Activated CD8-positive, alpha-beta T cell treated with anti-CD3 and anti-CD28 coated beads, Interleukin-2, amount 10 ng/mL, durations not matched to agents 7 days and 5 days (primary cell): ENCODE measurements at regions of chr7 and their contacts with region 1.

Region 1: GRCh38 chr7:106056513-106057203 is 55.5 kb downstream of the SYPL1 start:
- DNase-seq: peak; percentile 78
- ATAC-seq: peak; percentile 98
- H3K4me3 Mint-ChIP-seq: no peak overlapping the region
- H3K27ac Mint-ChIP-seq: no peak overlapping the region
- H3K4me1 Mint-ChIP-seq: peaks cover 35% of the 10 kb centered on the region
- H3K27me3 Mint-ChIP-seq: peaks cover 2% of the 10 kb centered on the region

Region 2: GRCh38 chr7:106009403-106010226 is 47.0 kb before region 1 on chr7:
- CTCF ChIA-PET with region 1: no interaction called
- POLR2A ChIA-PET with region 1: no interaction called
- DNase-seq: peak; percentile 80
- ATAC-seq: peak; percentile 100
- H3K4me3 Mint-ChIP-seq: no peak overlapping the region
- H3K27ac Mint-ChIP-seq: no peak overlapping the region
- H3K4me1 Mint-ChIP-seq: peaks cover 12% of the 10 kb centered on the region
- H3K27me3 Mint-ChIP-seq: peaks cover 19% of the 10 kb centered on the region

Region 3: DNA sequence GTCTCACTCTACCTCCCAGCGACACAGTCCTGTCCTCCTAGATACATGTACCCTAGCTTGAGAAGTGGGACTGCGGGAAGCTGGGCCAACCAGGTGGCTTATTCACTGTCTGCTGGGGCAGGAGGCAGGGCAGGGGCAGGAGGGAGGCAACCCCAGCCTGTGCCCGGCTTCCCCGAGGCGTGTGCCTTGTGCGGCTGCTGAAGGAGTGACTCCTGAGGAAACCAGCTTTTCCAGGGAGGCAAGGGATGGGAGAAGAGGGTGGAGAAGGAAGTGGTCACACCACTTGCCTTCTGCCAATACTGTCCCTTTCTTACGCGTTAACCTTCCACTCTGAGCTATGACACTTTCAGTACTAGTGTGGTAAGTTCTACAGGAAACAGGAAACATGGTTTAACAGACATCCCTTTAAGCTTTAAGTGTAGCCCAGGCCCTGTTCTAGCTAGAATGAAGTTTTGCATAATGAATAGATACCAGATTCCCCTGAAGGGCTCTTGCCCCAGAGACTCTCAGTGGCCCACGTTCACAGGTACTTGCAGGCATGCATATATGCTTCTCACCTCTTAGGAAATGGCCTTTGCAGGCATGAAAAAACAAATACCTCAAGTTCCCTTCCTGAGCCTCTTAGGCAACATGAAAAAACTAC is 14.8 kb after region 1 on chr7:
- CTCF ChIA-PET with region 1: interaction called, 48 read pairs
- POLR2A ChIA-PET with region 1: interaction called, 8 read pairs
- DNase-seq: peak; percentile 68
- ATAC-seq: peak; percentile 98
- H3K4me3 Mint-ChIP-seq: peak overlapping the region; percentile 76
- H3K27ac Mint-ChIP-seq: peak overlapping the region; percentile 99
- H3K4me1 Mint-ChIP-seq: peaks cover 72% of the 10 kb centered on the region
- H3K27me3 Mint-ChIP-seq: no peaks in the 10 kb centered on the region

Region 4: DNA sequence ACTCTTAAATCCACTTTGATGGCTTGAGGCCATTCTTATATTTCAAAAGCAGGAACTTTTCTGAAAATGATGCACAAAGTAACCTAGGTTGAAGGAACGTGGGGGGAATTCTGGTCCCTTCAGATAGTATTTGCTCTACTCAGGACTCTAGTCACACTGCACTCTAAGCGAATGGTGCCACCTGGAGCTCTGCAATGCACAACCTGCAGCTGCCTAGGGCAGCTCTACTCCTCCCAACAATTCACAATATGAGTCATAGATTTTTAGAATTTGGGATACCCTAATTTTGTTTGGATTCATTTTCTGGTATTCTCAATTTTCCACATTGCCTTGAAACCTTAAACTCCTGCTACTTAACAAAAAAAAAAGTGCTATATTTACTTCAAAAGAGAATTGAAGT is 38.1 kb after region 1 on chr7:
- CTCF ChIA-PET with region 1: interaction called, 11 read pairs
- POLR2A ChIA-PET with region 1: no interaction called
- DNase-seq: no peak
- ATAC-seq: no peak
- H3K4me3 Mint-ChIP-seq: no peak overlapping the region
- H3K27ac Mint-ChIP-seq: no peak overlapping the region
- H3K4me1 Mint-ChIP-seq: peaks cover 14% of the 10 kb centered on the region
- H3K27me3 Mint-ChIP-seq: no peaks in the 10 kb centered on the region

Region 5: GRCh38 chr7:106112117-106112971 is 55.7 kb after region 1 on chr7 and contains the start of gene SYPL1:
- CTCF ChIA-PET with region 1: interaction called, 23 read pairs
- POLR2A ChIA-PET with region 1: interaction called, 11 read pairs
- DNase-seq: peak; percentile 95
- ATAC-seq: peak; percentile 87
- H3K4me3 Mint-ChIP-seq: peak within 1 kb of the TSS; percentile 83
- H3K27ac Mint-ChIP-seq: peak within 1 kb of the TSS; percentile 93
- H3K4me1 Mint-ChIP-seq: peaks cover 57% of the 10 kb centered on the region
- H3K27me3 Mint-ChIP-seq: no peaks in the 10 kb centered on the region
- total RNA-seq, gene SYPL1: 51.3 to 52.4 TPM

Region 6: GRCh38 chr7:106166655-106167342 is 110.1 kb after region 1 on chr7:
- CTCF ChIA-PET with region 1: interaction called, 76 read pairs
- POLR2A ChIA-PET with region 1: no interaction called
- DNase-seq: peak; percentile 57
- ATAC-seq: no peak
- H3K4me3 Mint-ChIP-seq: no peak overlapping the region
- H3K27ac Mint-ChIP-seq: no peak overlapping the region
- H3K4me1 Mint-ChIP-seq: no peaks in the 10 kb centered on the region
- H3K27me3 Mint-ChIP-seq: peaks cover 17% of the 10 kb centered on the region